Activated CD4-positive, alpha-beta memory T cell treated with anti-CD3 and anti-CD28 coated beads for 36 hours (primary cell): ENCODE measurements at regions of chr2 and their contacts with region 1.

Region 1: GRCh38 chr2:7692657-7693161 is 775.5 kb downstream of the RNF144A start:
- DNase-seq: no peak
- H3K4me3 Mint-ChIP-seq: peak overlapping the region; percentile 6
- H3K27ac Mint-ChIP-seq: no peak overlapping the region
- H3K4me1 Mint-ChIP-seq: peaks cover 37% of the 10 kb centered on the region
- H3K27me3 Mint-ChIP-seq: peaks cover 3% of the 10 kb centered on the region

Region 2: GRCh38 chr2:7725171-7725849 is 32.6 kb after region 1 on chr2:
- CTCF ChIA-PET with region 1: no interaction called
- POLR2A ChIA-PET with region 1: no interaction called
- intact Hi-C with region 1: loop called (anchors 2 kb)
- DNase-seq: peak; percentile 46
- H3K4me3 Mint-ChIP-seq: peak overlapping the region; percentile 68
- H3K27ac Mint-ChIP-seq: peak overlapping the region; percentile 80
- H3K4me1 Mint-ChIP-seq: peaks cover 36% of the 10 kb centered on the region
- H3K27me3 Mint-ChIP-seq: no peaks in the 10 kb centered on the region

Region 3: GRCh38 chr2:7773362-7774360 is 81.0 kb after region 1 on chr2:
- CTCF ChIA-PET with region 1: no interaction called
- POLR2A ChIA-PET with region 1: no interaction called
- intact Hi-C with region 1: loop called (anchors 2 kb)
- DNase-seq: peak; percentile 65
- H3K4me3 Mint-ChIP-seq: no peak overlapping the region
- H3K27ac Mint-ChIP-seq: peak overlapping the region; percentile 66
- H3K4me1 Mint-ChIP-seq: peaks cover 33% of the 10 kb centered on the region
- H3K27me3 Mint-ChIP-seq: peaks cover 12% of the 10 kb centered on the region

Region 4: DNA sequence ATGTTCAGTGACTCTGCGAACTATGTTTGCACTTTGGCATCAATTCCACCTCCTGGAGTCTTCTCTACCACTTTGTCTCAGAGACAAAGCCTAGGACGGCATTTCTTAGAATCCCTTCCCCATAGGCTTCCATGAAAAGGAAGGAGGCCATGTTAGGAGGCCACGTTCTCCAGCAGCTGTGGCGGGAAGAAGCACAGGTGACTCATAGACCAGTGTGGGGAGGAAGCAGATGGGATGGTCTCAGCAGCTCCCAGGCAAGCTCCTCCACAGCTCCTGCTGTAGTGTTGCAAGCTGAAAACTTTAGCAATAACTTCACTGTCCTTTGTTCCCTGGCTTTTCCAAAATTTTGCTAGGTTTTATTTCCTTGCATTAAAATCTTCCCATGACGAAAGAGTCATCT is 207.9 kb after region 1 on chr2:
- CTCF ChIA-PET with region 1: no interaction called
- POLR2A ChIA-PET with region 1: no interaction called
- intact Hi-C with region 1: no loop called
- DNase-seq: no peak
- H3K4me3 Mint-ChIP-seq: no peak overlapping the region
- H3K27ac Mint-ChIP-seq: no peak overlapping the region
- H3K4me1 Mint-ChIP-seq: peaks cover 8% of the 10 kb centered on the region
- H3K27me3 Mint-ChIP-seq: peaks cover 2% of the 10 kb centered on the region